ENCODE measurements at regions of chr2 and their contacts with region 1.

Region 1: DNA sequence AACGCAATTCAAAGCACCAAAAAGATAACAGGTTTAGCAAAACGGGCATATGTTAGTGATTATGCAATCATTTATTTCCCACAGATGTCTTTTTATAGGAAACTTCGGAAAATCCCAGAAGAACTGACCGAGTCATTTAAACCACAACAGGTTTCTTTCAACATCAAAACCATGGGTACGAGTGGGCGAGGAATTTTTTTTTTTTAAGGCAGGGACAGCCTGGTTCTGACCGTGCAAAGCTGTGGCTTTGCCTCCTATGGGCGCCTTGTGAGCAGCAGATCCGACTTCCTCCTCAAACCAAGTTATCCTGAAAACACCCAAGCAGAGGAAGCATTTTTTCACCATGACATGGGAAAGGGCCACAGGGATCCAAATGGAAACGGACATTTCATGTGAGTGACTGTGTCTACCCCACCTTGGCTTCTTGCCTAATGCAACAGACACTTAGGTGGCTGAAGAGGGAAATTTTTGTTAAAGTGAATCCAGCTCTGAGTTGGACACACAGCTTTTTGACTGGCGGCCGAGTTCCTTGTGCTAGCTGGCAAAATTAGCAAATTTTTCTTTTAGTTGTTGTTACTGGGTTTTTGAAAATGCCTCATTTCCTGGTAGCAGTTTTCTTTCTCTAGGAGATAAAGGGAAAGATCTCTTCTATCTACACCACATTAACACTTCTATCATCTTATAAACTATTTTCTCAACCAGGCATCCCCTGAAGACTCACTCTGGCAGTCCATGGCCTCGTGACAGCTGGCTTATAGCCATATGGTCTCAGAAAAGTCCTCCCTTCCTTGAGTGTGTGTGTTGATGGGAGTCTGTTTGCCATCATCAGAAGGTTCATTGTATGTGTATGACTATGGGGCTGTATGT is 487.4 kb upstream of the ZEB2 start:
- DNase-seq: peak; percentile 97
- ATAC-seq: peak; percentile 86
- H3K4me3 ChIP-seq: peak overlapping the region; percentile 50
- H3K27ac ChIP-seq: peak overlapping the region; percentile 95
- H3K4me1 ChIP-seq: peaks cover 40% of the 10 kb centered on the region
- H3K27me3 ChIP-seq: no peaks in the 10 kb centered on the region
- CTCF ChIP-seq: no peak

Region 2: DNA sequence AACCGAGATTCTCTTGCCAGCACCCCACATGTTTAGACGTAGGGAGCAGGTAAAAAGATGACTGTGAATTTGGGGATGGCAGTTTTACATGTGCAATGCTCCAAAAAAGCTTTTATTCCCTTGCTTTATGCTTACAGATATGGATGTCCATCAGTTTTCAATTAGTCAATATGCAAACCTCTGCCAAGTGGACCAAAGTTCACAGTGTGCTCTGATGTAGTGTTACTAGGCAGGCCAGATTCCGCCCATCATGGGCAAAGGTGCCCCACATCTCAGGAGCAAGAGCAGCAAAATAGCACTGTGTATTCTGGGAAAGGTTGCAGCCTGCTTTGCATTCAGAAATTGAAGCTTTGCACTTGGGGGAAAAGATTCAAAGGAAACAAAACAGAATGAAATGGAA is 157.7 kb before region 1 on chr2:
- CTCF ChIA-PET with region 1: no interaction called
- POLR2A ChIA-PET with region 1: no interaction called
- intact Hi-C with region 1: no loop called
- DNase-seq: no peak
- ATAC-seq: no peak
- H3K4me3 ChIP-seq: no peak overlapping the region
- H3K27ac ChIP-seq: no peak overlapping the region
- H3K4me1 ChIP-seq: no peaks in the 10 kb centered on the region
- H3K27me3 ChIP-seq: no peaks in the 10 kb centered on the region
- CTCF ChIP-seq: no peak

Region 3: GRCh38 chr2:144990661-144991060 is 16.7 kb before region 1 on chr2:
- CTCF ChIA-PET with region 1: no interaction called
- POLR2A ChIA-PET with region 1: no interaction called
- intact Hi-C with region 1: no loop called
- DNase-seq: no peak
- ATAC-seq: no peak
- H3K4me3 ChIP-seq: no peak overlapping the region
- H3K27ac ChIP-seq: no peak overlapping the region
- H3K4me1 ChIP-seq: peaks cover 4% of the 10 kb centered on the region
- H3K27me3 ChIP-seq: no peaks in the 10 kb centered on the region
- CTCF ChIP-seq: no peak

Region 4: GRCh38 chr2:145484443-145485097 is 477.2 kb after region 1 on chr2:
- CTCF ChIA-PET with region 1: no interaction called
- POLR2A ChIA-PET with region 1: no interaction called
- intact Hi-C with region 1: loop called (anchors 1 kb)
- DNase-seq: peak; percentile 91
- ATAC-seq: peak; percentile 98
- H3K4me3 ChIP-seq: no peak overlapping the region
- H3K27ac ChIP-seq: peak overlapping the region; percentile 71
- H3K4me1 ChIP-seq: peaks cover 16% of the 10 kb centered on the region
- H3K27me3 ChIP-seq: no peaks in the 10 kb centered on the region
- CTCF ChIP-seq: peak; percentile 70